HepG2 (cell line): ENCODE measurements at regions of chr11 and their contacts with region 1.

Region 1: GRCh38 chr11:63478896-63479295 is 12.1 kb downstream of the PLAAT5 start:
- DNase-seq: peak; percentile 61
- ATAC-seq: peak; percentile 71
- H3K4me3 ChIP-seq: no peak overlapping the region
- H3K27ac ChIP-seq: no peak overlapping the region
- H3K4me1 ChIP-seq: no peaks in the 10 kb centered on the region
- H3K27me3 ChIP-seq: no peaks in the 10 kb centered on the region
- CTCF ChIP-seq: peak; percentile 92
- EP300 ChIP-seq: no peak
- POLR2A ChIP-seq: no peak
- RAD21 ChIP-seq: peak; percentile 85

Region 2: GRCh38 chr11:63508009-63508408 is 29.1 kb after region 1 on chr11:
- CTCF ChIA-PET with region 1: interaction called, 21 read pairs
- POLR2A ChIA-PET with region 1: no interaction called
- in situ Hi-C with region 1: no loop called
- intact Hi-C with region 1: loop called (anchors 1 kb)
- DNase-seq: peak; percentile 64
- ATAC-seq: peak; percentile 94
- H3K4me3 ChIP-seq: no peak overlapping the region
- H3K27ac ChIP-seq: no peak overlapping the region
- H3K4me1 ChIP-seq: no peaks in the 10 kb centered on the region
- H3K27me3 ChIP-seq: peaks cover 5 to 36% of the 10 kb centered on the region in 2 experiments; a peak in 4 of 5 replicates
- CTCF ChIP-seq: peak; percentile 83
- EP300 ChIP-seq: no peak
- POLR2A ChIP-seq: no peak
- RAD21 ChIP-seq: peak; percentile 59; the same call in 1 of the 2 replicates

Region 3: DNA sequence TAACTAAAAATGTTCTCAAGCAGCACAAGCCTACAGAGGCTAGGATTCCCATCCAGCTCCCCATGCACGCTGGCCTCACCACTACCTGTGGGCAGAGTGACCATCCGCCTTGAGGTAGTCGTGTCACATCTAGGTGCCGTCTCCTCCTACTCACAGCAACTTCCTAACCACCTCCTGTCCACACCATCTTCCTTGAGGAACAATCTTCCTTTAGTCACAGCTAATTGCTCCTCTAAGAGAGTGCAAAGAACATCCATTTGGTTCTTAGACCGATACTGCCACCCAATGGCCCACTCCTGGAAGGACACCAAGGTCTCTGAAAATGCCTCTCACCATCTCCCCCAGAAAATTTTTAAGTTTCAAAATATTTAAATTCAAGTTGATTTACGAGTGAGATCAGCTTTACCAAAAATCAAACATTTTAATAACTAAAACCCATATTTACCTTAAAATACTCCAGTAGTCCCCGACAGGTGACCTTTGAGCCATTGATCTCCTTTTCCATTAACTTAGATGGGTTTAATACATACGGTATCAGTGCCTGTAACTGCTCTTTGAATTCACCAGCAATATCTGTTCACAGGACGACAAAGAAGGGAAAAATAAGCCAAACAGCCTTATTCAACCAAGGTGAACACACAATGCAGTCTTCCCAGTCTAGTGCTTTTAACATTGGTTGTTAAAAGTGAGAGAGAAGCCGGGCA is 157.0 kb after region 1 on chr11:
- CTCF ChIA-PET with region 1: interaction called, 45 read pairs
- POLR2A ChIA-PET with region 1: no interaction called
- in situ Hi-C with region 1: loop called (anchors 5 kb)
- intact Hi-C with region 1: loop called (anchors 1 kb)
- DNase-seq: peak; percentile 47
- ATAC-seq: peak; percentile 77
- H3K4me3 ChIP-seq: no peak overlapping the region
- H3K27ac ChIP-seq: no peak overlapping the region
- H3K4me1 ChIP-seq: peaks cover 6% of the 10 kb centered on the region; the same call in 1 of the 2 replicates
- H3K27me3 ChIP-seq: no peaks in the 10 kb centered on the region; a peak in 2 of 5 replicates
- CTCF ChIP-seq: peak; percentile 89
- EP300 ChIP-seq: no peak
- POLR2A ChIP-seq: no peak
- RAD21 ChIP-seq: peak; percentile 88

Region 4: GRCh38 chr11:63738720-63739360 is 259.9 kb after region 1 on chr11:
- CTCF ChIA-PET with region 1: interaction called, 8 read pairs
- POLR2A ChIA-PET with region 1: no interaction called
- in situ Hi-C with region 1: loop called (anchors 25 kb)
- intact Hi-C with region 1: loop called (anchors 5 kb)
- DNase-seq: peak; percentile 65
- ATAC-seq: no peak
- H3K4me3 ChIP-seq: no peak overlapping the region
- H3K27ac ChIP-seq: no peak overlapping the region
- H3K4me1 ChIP-seq: peaks cover 20% of the 10 kb centered on the region
- H3K27me3 ChIP-seq: no peaks in the 10 kb centered on the region
- CTCF ChIP-seq: peak; percentile 68
- EP300 ChIP-seq: no peak
- POLR2A ChIP-seq: no peak
- RAD21 ChIP-seq: no peak